Activated CD4-positive, alpha-beta T cell treated with anti-CD3 and anti-CD28 coated beads for 36 hours (primary cell): ENCODE measurements at regions of chr2 and their contacts with region 1.

Region 1: DNA sequence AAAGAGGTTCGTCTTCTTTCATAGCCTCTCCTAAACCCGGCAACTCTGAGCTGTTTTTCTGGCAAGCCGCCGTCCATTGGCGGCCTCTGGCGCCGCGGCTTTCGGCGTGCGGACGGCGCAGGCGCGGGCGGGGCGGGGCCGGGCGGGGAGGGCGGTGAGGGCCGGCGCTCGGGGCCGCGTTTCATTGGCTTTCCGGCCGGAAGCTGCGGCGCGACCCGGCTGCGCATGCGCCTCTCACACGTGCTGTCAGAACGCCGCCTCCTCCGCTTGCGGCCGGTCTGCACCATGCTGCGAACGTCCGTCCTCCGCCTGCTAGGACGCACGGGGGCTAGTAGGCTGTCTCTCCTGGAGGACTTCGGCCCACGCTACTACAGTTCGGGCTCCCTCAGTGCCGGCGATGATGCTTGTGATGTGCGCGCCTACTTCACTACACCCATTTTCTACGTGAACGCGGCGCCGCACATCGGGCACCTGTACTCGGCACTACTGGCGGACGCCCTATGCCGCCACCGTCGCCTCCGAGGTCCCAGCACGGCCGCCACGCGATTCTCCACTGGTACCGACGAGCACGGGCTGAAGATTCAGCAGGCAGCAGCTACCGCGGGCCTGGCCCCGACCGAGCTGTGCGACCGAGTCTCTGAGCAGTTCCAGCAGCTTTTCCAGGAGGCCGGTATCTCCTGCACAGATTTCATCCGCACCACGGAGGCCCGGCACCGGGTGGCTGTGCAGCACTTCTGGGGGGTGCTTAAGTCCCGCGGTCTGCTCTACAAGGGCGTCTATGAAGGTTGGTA is at the start of gene MARS2:
- DNase-seq: peak; percentile 96
- ATAC-seq: peak; percentile 79
- H3K4me3 Mint-ChIP-seq: peak within 1 kb of the TSS; percentile 80
- H3K27ac Mint-ChIP-seq: peak within 1 kb of the TSS; percentile 94
- H3K4me1 Mint-ChIP-seq: peaks cover 41% of the 10 kb centered on the region
- H3K27me3 Mint-ChIP-seq: peaks cover 2% of the 10 kb centered on the region
- total RNA-seq, gene MARS2: 9.2 to 12.1 TPM

Region 2: GRCh38 chr2:196926562-196927375 is 778.5 kb before region 1 on chr2 and contains the start of gene PGAP1:
- CTCF ChIA-PET with region 1: no interaction called
- POLR2A ChIA-PET with region 1: no interaction called
- intact Hi-C with region 1: loop called in 1 of 2 experiments (anchors 2 kb)
- DNase-seq: peak; percentile 94
- ATAC-seq: peak; percentile 80
- H3K4me3 Mint-ChIP-seq: peak within 1 kb of the TSS; percentile 92
- H3K27ac Mint-ChIP-seq: peak within 1 kb of the TSS; percentile 99
- H3K4me1 Mint-ChIP-seq: peaks cover 31% of the 10 kb centered on the region
- H3K27me3 Mint-ChIP-seq: no peaks in the 10 kb centered on the region
- total RNA-seq, gene PGAP1: 22.2 to 25.1 TPM

Region 3: GRCh38 chr2:197453161-197453914 is 252.0 kb before region 1 on chr2 and contains the start of gene COQ10B:
- CTCF ChIA-PET with region 1: no interaction called
- POLR2A ChIA-PET with region 1: no interaction called
- intact Hi-C with region 1: loop called (anchors 1 to 5 kb)
- DNase-seq: peak; percentile 99
- ATAC-seq: peak; percentile 93
- H3K4me3 Mint-ChIP-seq: peak within 1 kb of the TSS; percentile 90
- H3K27ac Mint-ChIP-seq: peak within 1 kb of the TSS; percentile 96
- H3K4me1 Mint-ChIP-seq: peaks cover 42% of the 10 kb centered on the region
- H3K27me3 Mint-ChIP-seq: no peaks in the 10 kb centered on the region
- total RNA-seq, gene COQ10B: 9.7 to 13.3 TPM

Region 4: GRCh38 chr2:197604117-197604860 is 101.0 kb before region 1 on chr2:
- CTCF ChIA-PET with region 1: no interaction called
- POLR2A ChIA-PET with region 1: no interaction called
- intact Hi-C with region 1: loop called in 1 of 2 experiments (anchors 5 kb)
- DNase-seq: no peak
- ATAC-seq: no peak
- H3K4me3 Mint-ChIP-seq: no peak overlapping the region
- H3K27ac Mint-ChIP-seq: no peak overlapping the region
- H3K4me1 Mint-ChIP-seq: peaks cover 12% of the 10 kb centered on the region
- H3K27me3 Mint-ChIP-seq: peaks cover 2% of the 10 kb centered on the region

Region 5: DNA sequence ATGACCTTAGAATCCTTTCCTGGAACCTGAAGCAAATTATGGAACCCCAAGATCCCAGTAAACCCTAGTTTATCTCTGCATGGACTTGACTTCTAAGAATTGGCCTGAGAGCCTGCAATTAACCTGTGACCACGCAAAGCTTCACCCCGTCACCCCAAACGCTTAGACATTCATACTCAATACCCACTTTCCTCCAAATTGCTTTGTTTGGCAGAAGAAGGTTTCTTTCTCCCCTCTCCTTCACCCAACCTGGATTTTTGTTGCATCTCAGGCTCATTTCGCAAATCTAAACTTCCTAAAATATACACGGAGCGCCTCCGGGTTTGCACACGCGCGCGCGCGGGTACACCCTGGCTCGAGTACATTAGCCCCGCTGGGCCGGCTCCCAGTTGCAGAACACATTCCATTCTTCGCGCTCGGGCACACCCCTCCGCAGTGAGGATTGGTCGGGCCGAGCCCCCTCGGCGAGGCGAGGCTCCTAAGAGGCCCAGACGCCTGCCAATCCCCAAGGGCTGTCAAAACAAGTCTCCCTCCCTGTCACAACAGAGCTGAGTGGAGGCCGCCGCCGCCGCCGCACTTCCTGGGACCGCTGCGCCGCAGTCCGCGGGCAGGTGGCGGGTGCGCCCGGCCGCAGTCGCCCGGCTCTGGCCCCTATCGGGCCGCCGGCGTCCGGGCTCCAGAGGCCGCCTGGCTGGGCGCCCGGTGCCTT is 98.9 kb after region 1 on chr2 and contains the start of gene PLCL1:
- CTCF ChIA-PET with region 1: no interaction called
- POLR2A ChIA-PET with region 1: no interaction called
- intact Hi-C with region 1: loop called in 1 of 2 experiments (anchors 1 kb)
- DNase-seq: peak; percentile 94
- ATAC-seq: peak; percentile 99
- H3K4me3 Mint-ChIP-seq: peak within 1 kb of the TSS; percentile 89
- H3K27ac Mint-ChIP-seq: peak within 1 kb of the TSS; percentile 84
- H3K4me1 Mint-ChIP-seq: peaks cover 45% of the 10 kb centered on the region
- H3K27me3 Mint-ChIP-seq: peaks cover 2% of the 10 kb centered on the region
- total RNA-seq, gene PLCL1: 1.6 to 1.7 TPM

Region 6: GRCh38 chr2:199459286-199460016 is 1754.1 kb after region 1 on chr2:
- CTCF ChIA-PET with region 1: no interaction called
- POLR2A ChIA-PET with region 1: no interaction called
- intact Hi-C with region 1: loop called in 1 of 2 experiments (anchors 10 kb)
- DNase-seq: peak; percentile 80
- ATAC-seq: peak; percentile 7
- H3K4me3 Mint-ChIP-seq: peak overlapping the region; percentile 82
- H3K27ac Mint-ChIP-seq: peak overlapping the region; percentile 78
- H3K4me1 Mint-ChIP-seq: peaks cover 24% of the 10 kb centered on the region
- H3K27me3 Mint-ChIP-seq: peaks cover 41% of the 10 kb centered on the region

Region 7: DNA sequence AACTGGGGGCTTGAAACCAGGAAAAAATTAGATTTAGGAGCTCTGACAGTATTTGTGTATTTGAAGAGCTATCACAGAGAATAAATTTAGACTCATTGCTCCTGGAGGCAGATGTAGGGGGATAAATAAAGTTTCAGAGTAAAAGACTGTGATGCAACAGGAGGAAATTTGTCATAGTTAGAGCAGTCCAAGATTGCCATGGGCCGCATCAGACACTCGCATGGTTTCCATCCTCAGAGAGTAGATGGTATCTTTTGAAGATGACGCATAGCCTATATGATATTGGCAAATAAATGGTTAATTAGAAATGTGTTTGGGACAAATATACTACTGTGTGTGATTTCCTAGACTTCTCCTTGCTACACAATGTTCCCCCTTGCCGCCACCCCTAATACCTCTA is 1975.2 kb after region 1 on chr2:
- CTCF ChIA-PET with region 1: no interaction called
- POLR2A ChIA-PET with region 1: no interaction called
- intact Hi-C with region 1: no loop called
- DNase-seq: no peak
- ATAC-seq: no peak
- H3K4me3 Mint-ChIP-seq: no peak overlapping the region
- H3K27ac Mint-ChIP-seq: no peak overlapping the region
- H3K4me1 Mint-ChIP-seq: peaks cover 9% of the 10 kb centered on the region
- H3K27me3 Mint-ChIP-seq: peaks cover 8% of the 10 kb centered on the region